ENCODE measurements at regions of chr13 and their contacts with region 1.

Region 1: GRCh38 chr13:29369060-29369743 is 226.3 kb downstream of the SLC7A1 start:
- DNase-seq: peak; percentile 6
- H3K4me3 Mint-ChIP-seq: no peak overlapping the region
- H3K27ac Mint-ChIP-seq: no peak overlapping the region
- H3K4me1 Mint-ChIP-seq: no peaks in the 10 kb centered on the region
- H3K27me3 Mint-ChIP-seq: peaks cover 7% of the 10 kb centered on the region
- CTCF ChIP-seq: no peak

Region 2: DNA sequence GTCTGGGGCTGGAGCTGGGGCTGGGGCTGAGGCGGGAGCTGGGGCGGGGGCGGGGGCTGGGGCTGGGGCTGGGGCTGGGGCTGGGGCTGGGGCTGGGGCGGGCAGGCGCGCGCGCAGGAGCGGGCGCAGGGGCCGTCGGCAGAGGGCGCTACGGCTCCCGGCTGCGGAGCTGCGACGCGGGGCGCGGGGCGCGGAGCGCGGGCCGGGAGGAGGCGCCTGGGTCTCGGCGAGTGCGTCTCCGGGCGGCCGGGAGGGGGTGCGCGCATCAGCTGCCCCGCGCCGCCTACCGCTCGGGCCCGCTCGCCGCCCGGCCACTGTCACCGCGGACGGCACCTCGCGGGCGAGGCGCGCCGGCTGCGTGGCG is 549.5 kb before region 1 on chr13:
- CTCF ChIA-PET with region 1: interaction called, 5 read pairs
- intact Hi-C with region 1: loop called (anchors 2 kb)
- DNase-seq: peak; percentile 66
- H3K4me3 Mint-ChIP-seq: peak overlapping the region; percentile 54
- H3K27ac Mint-ChIP-seq: no peak overlapping the region
- H3K4me1 Mint-ChIP-seq: no peaks in the 10 kb centered on the region
- H3K27me3 Mint-ChIP-seq: peaks cover 67% of the 10 kb centered on the region
- CTCF ChIP-seq: no peak